ENCODE measurements at regions of chr12 and their contacts with region 1.

Region 1: GRCh38 chr12:48995061-48995879 is 3.9 kb downstream of the DDN start:
- DNase-seq: peak; percentile 93 to 96
- H3K4me3 ChIP-seq: no peak overlapping the region
- H3K4me3 Mint-ChIP-seq: peak overlapping the region; percentile 59
- H3K27ac Mint-ChIP-seq: peak overlapping the region; percentile 5
- H3K4me1 ChIP-seq: peaks cover 28% of the 10 kb centered on the region
- H3K4me1 Mint-ChIP-seq: peaks cover 28% of the 10 kb centered on the region
- H3K27me3 ChIP-seq: no peaks in the 10 kb centered on the region
- H3K27me3 Mint-ChIP-seq: no peaks in the 10 kb centered on the region
- CTCF ChIP-seq: peak; percentile 93 to 95

Region 2: GRCh38 chr12:48924617-48925303 is 70.5 kb before region 1 on chr12:
- CTCF ChIA-PET with region 1: interaction called, 7 read pairs
- POLR2A ChIA-PET with region 1: no interaction called
- intact Hi-C with region 1: loop called (anchors 1 kb)
- DNase-seq: peak; percentile 81 to 85
- H3K4me3 ChIP-seq: peak overlapping the region; percentile 73
- H3K4me3 Mint-ChIP-seq: peak overlapping the region; percentile 83
- H3K27ac Mint-ChIP-seq: peak overlapping the region; percentile 76
- H3K4me1 ChIP-seq: peaks cover 5% of the 10 kb centered on the region; the same call in 1 of the 2 replicates
- H3K4me1 Mint-ChIP-seq: no peaks in the 10 kb centered on the region
- H3K27me3 ChIP-seq: no peaks in the 10 kb centered on the region
- H3K27me3 Mint-ChIP-seq: no peaks in the 10 kb centered on the region
- CTCF ChIP-seq: peak; percentile 72 to 96

Region 3: DNA sequence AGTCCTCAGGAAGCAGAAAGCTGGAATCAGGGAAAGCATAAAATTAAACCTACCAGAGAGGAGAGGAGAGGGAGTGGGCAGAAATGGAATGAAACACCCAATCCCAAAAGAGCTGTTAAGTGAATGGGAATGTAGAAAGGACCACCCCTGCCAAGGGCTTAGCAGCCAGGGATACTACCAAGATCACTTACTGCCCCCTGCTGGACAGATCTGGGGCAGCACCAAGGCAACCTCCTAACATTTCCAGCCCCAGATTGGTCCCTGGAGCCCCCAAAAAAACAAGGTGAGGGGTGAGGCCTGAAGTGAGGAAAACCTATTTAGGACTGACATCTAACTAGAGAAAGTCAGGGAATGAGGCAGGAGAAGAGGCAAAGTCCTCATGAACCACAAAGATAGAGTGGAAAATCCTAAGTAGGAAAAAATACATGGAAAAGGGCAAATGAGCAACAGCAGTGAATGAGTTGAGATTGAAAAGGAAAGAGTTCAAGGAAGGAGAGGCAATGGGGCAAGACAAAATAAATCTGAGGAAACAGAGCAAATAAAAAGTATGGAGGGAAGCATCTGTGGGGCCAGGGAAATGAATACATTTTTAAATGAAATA is 58.8 kb before region 1 on chr12:
- CTCF ChIA-PET with region 1: interaction called, 3 read pairs
- POLR2A ChIA-PET with region 1: no interaction called
- intact Hi-C with region 1: loop called (anchors 5 kb)
- DNase-seq: peak; percentile 75 to 88
- H3K4me3 ChIP-seq: no peak overlapping the region
- H3K4me3 Mint-ChIP-seq: no peak overlapping the region
- H3K27ac Mint-ChIP-seq: no peak overlapping the region
- H3K4me1 ChIP-seq: no peaks in the 10 kb centered on the region
- H3K4me1 Mint-ChIP-seq: no peaks in the 10 kb centered on the region
- H3K27me3 ChIP-seq: no peaks in the 10 kb centered on the region
- H3K27me3 Mint-ChIP-seq: no peaks in the 10 kb centered on the region
- CTCF ChIP-seq: peak; percentile 94 to 98

Region 4: DNA sequence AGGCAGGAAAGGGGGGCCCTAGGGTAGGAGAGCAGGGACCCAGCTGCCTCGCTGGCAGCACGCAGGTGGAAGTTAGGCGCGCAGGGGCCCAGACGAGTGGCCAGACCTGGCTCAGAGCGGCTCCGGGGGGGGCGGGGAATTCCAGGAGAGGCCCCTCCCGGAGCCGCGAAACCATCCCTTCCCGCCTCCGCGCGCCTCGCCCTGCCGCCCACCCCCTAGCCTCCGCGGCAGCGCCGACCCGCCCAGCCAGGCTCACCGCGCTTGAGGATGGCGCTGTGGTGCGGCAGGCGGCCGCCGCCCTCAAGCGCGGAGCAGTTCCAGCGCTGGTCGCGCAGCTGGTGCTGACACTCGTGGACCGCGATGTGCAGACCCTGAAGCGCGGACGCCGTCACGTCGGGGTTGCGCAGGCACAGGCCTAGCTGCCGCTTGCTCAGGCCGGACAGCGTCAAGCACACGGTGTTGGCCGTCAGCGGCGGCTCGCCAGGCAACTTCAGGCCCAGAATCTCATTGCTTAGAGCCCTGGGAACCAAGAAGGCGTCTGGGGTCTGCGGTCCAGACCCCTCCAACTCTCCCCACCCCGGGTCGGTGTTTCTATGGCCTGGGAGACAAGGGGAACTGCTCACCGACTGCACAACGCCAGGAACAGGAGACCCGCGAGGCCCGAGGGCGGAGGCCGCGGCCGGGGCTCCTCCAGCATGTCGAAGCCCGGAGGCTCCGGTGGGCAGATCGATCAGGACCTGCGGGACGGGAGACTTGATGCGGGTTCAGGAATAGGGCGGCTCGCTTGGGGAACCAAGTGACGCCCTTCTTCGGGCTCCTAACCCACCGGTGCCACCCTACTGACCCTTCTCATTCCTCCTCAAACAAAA is 25.2 kb before region 1 on chr12:
- CTCF ChIA-PET with region 1: interaction called, 10 read pairs
- POLR2A ChIA-PET with region 1: no interaction called
- intact Hi-C with region 1: loop called (anchors 1 kb)
- DNase-seq: no peak
- H3K4me3 ChIP-seq: no peak overlapping the region
- H3K4me3 Mint-ChIP-seq: peak overlapping the region; percentile 77
- H3K27ac Mint-ChIP-seq: peak overlapping the region; percentile 7
- H3K4me1 ChIP-seq: peaks cover 25% of the 10 kb centered on the region
- H3K4me1 Mint-ChIP-seq: peaks cover 18% of the 10 kb centered on the region
- H3K27me3 ChIP-seq: no peaks in the 10 kb centered on the region
- H3K27me3 Mint-ChIP-seq: peaks cover 3% of the 10 kb centered on the region
- CTCF ChIP-seq: no peak

Region 5: DNA sequence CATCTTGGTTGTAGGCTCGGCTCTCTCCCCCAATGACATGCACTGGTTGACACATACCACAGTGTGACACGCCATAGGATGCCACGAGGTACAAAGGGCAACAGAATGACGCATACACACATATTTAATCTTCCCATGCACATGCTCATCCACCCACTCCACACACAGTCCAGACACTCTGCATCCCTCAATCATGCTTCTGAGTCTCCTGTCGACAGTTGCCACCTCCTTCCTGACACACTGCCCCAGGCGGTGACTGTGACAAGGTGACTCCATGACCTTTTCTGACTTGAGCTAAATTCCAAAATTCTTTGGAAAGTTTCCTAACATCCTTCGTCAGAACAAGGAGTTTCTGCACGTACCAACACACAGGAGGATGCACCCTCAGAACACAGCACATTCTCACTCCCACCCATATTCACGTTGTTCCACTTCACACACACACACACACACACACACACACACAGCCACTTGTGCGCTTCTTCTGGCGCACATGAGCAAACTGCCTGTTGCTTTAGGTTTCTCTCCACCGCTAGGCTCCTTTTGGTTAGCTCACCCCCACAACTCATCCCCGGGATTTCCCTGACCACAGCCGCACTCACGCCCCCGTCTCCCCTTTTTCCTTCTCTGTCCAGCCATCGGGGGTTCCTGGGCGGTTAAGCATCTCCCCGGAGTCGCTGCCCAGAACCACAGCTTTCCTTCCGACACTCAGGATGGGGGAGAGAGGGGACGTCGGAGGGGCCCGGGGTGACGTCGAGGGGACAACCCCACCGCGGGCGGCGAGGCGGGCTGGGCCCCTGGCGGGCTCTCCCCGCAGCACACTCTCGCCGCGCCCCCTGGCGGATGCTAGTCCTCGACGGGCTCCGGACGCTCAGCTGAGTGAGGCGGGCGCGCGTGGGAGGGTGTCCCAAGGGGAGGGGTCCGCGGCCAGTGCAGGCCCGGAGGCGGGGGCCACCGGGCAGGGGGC is 17.7 kb before region 1 on chr12:
- CTCF ChIA-PET with region 1: interaction called, 90 read pairs
- POLR2A ChIA-PET with region 1: no interaction called
- intact Hi-C with region 1: loop called (anchors 1 kb)
- DNase-seq: peak; percentile 61 to 86
- H3K4me3 ChIP-seq: peak overlapping the region; percentile 48
- H3K4me3 Mint-ChIP-seq: peak overlapping the region; percentile 0
- H3K27ac Mint-ChIP-seq: no peak overlapping the region
- H3K4me1 ChIP-seq: peaks cover 23% of the 10 kb centered on the region
- H3K4me1 Mint-ChIP-seq: peaks cover 17% of the 10 kb centered on the region
- H3K27me3 ChIP-seq: peaks cover 14% of the 10 kb centered on the region
- H3K27me3 Mint-ChIP-seq: peaks cover 23% of the 10 kb centered on the region
- CTCF ChIP-seq: peak; percentile 79 to 91

Region 6: GRCh38 chr12:49018261-49019119 is 23.2 kb after region 1 on chr12 and contains the start of gene PRKAG1:
- CTCF ChIA-PET with region 1: interaction called, 33 read pairs
- POLR2A ChIA-PET with region 1: interaction called, 4 read pairs
- intact Hi-C with region 1: loop called (anchors 1 kb)
- DNase-seq: peak; percentile 97 to 98
- H3K4me3 ChIP-seq: peak within 1 kb of the TSS; percentile 73
- H3K4me3 Mint-ChIP-seq: peak within 1 kb of the TSS; percentile 91
- H3K27ac Mint-ChIP-seq: peak within 1 kb of the TSS; percentile 98
- H3K4me1 ChIP-seq: 0 out of 2 replicates have a peak, but pooled peaks cover 4% of the 10 kb centered on the region
- H3K4me1 Mint-ChIP-seq: peaks cover 19% of the 10 kb centered on the region
- H3K27me3 ChIP-seq: no peaks in the 10 kb centered on the region
- H3K27me3 Mint-ChIP-seq: no peaks in the 10 kb centered on the region
- CTCF ChIP-seq: peak; percentile 40 to 77
- total RNA-seq, gene PRKAG1: 60.3 and 61.4 TPM in 2 replicates